Astrocyte of the cerebellum (primary cell): ENCODE measurements at regions of chr3 and their contacts with region 1.

Region 1: GRCh38 chr3:141421639-141422330 is 53.5 kb downstream of the ZBTB38 start:
- DNase-seq: no peak
- H3K4me3 ChIP-seq: no peak overlapping the region
- CTCF ChIP-seq: no peak

Region 2: GRCh38 chr3:141380987-141381386 is 40.8 kb before region 1 on chr3:
- in situ Hi-C with region 1: loop called (anchors 5 kb)
- DNase-seq: no peak
- H3K4me3 ChIP-seq: no peak overlapping the region
- CTCF ChIP-seq: no peak